ENCODE measurements at regions of chr15 and their contacts with region 1.

Region 1: GRCh38 chr15:25372298-25372697 is 66.5 kb downstream of the UBE3A start:
- DNase-seq: no peak
- ATAC-seq: no peak
- H3K4me3 ChIP-seq: no peak overlapping the region
- H3K27ac ChIP-seq: peak overlapping the region in 1 of 12 donors; percentile 7
- H3K4me1 ChIP-seq: peaks cover 0 to 26% (median 5%) of the 10 kb centered on the region in 12 donors
- H3K27me3 ChIP-seq: no peaks in the 10 kb centered on the region
- CTCF ChIP-seq: no peak
- POLR2A ChIP-seq: no peak

Region 2: DNA sequence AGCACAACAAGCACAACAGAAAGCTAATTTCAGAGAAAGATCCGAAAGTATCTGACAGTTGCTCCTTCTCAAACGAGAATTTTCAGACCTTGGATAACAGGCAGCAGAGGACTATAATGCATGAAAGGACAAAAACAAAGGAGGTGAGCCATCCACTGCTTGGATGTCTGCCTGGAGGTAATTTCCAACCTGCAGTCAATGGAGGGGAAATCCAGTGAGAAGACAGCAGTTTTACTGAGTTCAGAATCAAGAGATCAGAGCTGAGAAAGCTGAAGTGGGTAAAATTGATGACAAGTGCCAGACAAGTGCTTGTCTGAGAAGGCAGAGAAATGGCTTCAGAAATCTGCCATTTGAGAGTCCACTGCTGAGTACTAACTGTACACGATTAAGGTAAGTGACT is 44.4 kb after region 1 on chr15:
- intact Hi-C with region 1: loop called in 1 of 10 experiments (anchors 10 kb)
- DNase-seq: no peak
- ATAC-seq: no peak
- H3K4me3 ChIP-seq: no peak overlapping the region
- H3K27ac ChIP-seq: no peak overlapping the region
- H3K4me1 ChIP-seq: peaks cover 2 to 54% (median 30%) of the 10 kb centered on the region in 12 donors
- H3K27me3 ChIP-seq: no peaks in the 10 kb centered on the region
- CTCF ChIP-seq: no peak
- POLR2A ChIP-seq: no peak